ENCODE measurements at regions of chr10 and their contacts with region 1.

Region 1: DNA sequence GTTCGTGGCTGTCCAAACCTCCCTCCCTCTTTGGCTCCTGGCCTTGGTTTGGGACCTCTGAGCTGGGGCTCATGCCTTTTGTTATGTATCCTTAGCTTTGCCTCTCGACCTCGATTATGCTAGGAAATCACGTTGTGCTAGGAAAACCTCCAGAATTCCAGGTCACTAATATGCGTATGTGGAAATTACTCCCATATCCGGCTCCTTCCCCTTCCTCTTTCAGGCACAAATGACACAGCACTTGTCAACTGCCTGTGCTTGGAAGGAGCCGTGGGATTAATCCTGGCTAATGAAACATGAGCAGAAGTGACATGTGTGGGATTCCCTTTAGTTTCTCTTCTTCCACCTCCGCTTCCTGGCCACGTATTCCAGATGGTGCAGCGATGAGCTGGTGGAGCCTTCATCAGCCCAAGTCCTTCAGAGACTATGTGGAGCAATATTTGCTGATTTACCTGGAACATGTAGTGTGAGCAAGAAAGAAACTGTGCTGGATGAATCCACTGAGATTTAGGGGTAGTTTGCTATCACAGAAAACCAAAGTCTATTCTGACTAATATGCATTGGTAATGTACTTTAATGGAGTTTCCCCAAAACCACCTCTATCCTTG is 149.2 kb downstream of the REEP3 start:
- DNase-seq: peak; percentile 32
- CTCF ChIP-seq: no peak

Region 2: DNA sequence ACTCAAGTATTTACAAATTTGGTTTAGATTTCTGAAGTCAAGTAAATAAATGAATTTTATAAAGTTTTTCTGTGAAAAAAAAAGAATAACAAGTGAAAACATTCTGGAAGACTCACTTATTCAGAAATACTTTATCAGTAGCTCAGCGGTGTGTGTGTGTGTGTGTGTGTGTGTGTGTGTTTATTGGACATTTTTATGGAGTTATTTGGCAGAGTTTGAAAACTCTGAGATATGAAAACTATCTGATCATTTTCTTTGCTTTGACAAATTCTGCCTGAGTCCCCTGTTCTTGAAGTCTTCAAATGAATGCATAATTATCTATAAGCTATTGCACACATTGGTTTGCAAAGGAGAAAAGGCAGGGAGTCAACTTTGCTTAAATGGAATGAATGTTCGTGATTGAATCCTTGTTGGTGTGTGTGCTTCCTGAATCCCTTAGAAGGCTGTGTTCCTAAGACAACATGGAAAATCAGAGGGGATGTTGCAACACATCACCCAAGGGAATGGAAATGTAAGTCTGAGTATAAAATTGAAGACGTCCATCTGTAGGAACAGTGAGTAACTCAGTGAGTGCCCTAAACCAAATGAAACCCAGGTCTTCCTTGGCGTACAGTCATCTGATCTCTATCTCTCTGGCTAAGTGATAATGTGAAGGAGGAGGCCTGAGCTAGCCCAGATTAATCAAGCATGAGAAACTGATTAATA is 11.8 kb after region 1 on chr10:
- CTCF ChIA-PET with region 1: interaction called, 28 read pairs
- POLR2A ChIA-PET with region 1: no interaction called
- DNase-seq: no peak
- CTCF ChIP-seq: no peak

Measured in GM10248 (cell line).